ENCODE measurements at regions of chr12 and their contacts with region 1.

Region 1: GRCh38 chr12:86117711-86118110 is 138.5 kb downstream of the MGAT4C start:
- DNase-seq: no peak
- H3K4me3 ChIP-seq: no peak overlapping the region
- H3K27ac ChIP-seq: no peak overlapping the region
- H3K27me3 ChIP-seq: no peaks in the 10 kb centered on the region
- CTCF ChIP-seq: no peak

Region 2: DNA sequence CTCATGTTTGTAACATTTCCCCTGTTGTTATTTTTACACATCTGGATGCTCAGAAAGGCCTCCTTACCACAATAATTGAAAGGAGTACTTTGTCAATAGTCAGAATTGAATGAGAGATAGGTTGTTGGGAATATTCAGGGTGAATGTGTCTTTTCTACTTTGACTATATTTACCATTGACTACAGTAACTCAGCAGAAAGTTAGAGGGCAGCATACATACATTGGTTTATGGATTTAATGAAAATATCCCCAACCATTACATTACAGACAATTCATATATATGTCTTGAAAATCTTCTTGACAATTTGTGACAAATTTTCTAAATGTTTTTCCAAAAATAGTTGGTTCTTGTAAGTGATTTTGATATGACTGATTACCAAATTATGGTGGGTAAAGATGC is 145.9 kb before region 1 on chr12:
- CTCF ChIA-PET with region 1: interaction called, 10 read pairs
- POLR2A ChIA-PET with region 1: no interaction called
- DNase-seq: no peak
- H3K4me3 ChIP-seq: no peak overlapping the region
- H3K27ac ChIP-seq: no peak overlapping the region
- H3K27me3 ChIP-seq: no peaks in the 10 kb centered on the region
- CTCF ChIP-seq: peak; percentile 38

Region 3: DNA sequence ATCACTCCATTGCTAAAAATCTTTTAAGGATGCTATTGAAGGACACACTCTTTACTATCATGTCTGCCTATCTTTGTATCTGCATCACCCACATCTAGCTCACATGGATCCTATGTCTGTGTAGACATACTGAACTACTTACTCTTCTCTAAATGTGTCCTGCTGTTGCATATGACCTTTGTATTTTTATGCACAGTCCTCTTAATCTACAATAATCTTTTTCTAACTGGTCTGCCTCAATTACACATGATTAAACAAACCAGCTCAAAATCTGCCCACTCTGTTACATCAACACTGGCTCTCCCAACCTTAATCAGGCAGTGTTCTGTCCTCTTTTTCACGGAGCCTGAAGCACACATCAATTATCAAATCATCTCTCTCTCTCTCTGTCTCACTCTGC is 454.7 kb after region 1 on chr12:
- CTCF ChIA-PET with region 1: no interaction called
- POLR2A ChIA-PET with region 1: interaction called, 10 read pairs
- DNase-seq: no peak
- H3K4me3 ChIP-seq: no peak overlapping the region
- H3K27ac ChIP-seq: no peak overlapping the region
- H3K27me3 ChIP-seq: no peaks in the 10 kb centered on the region
- CTCF ChIP-seq: no peak